AG04449 (cell line): ENCODE measurements at regions of chr11 and their contacts with region 1.

Region 1: GRCh38 chr11:19938169-19938856 is 222.0 kb downstream of the DBX1 start:
- DNase-seq: no peak
- H3K4me3 ChIP-seq: no peak overlapping the region
- CTCF ChIP-seq: peak; percentile 65

Region 2: GRCh38 chr11:19864141-19865140 is 73.9 kb before region 1 on chr11:
- CTCF ChIA-PET with region 1: no interaction called
- POLR2A ChIA-PET with region 1: no interaction called
- DNase-seq: no peak
- H3K4me3 ChIP-seq: no peak overlapping the region
- CTCF ChIP-seq: no peak

Region 3: GRCh38 chr11:19919050-19919561 is 19.2 kb before region 1 on chr11:
- CTCF ChIA-PET with region 1: interaction called, 66 read pairs
- POLR2A ChIA-PET with region 1: interaction called, 7 read pairs
- DNase-seq: peak; percentile 99
- H3K4me3 ChIP-seq: no peak overlapping the region
- CTCF ChIP-seq: no peak